Activated CD4-positive, alpha-beta memory T cell treated with anti-CD3 and anti-CD28 coated beads, Interleukin-2, amount 10 ng/mL, durations not matched to agents 7 days and 5 days (primary cell): ENCODE measurements at regions of chr18 and their contacts with region 1.

Region 1: GRCh38 chr18:63161761-63162195 is 157.8 kb downstream of the BCL2 start:
- DNase-seq: peak; percentile 87
- H3K4me3 Mint-ChIP-seq: peak overlapping the region; percentile 76
- H3K27ac Mint-ChIP-seq: peak overlapping the region; percentile 95
- H3K4me1 Mint-ChIP-seq: peaks cover 90% of the 10 kb centered on the region
- H3K27me3 Mint-ChIP-seq: no peaks in the 10 kb centered on the region

Region 2: GRCh38 chr18:63131106-63131958 is 30.4 kb before region 1 on chr18:
- CTCF ChIA-PET with region 1: interaction called, 14 read pairs
- POLR2A ChIA-PET with region 1: interaction called, 10 read pairs
- DNase-seq: peak; percentile 59
- H3K4me3 Mint-ChIP-seq: no peak overlapping the region
- H3K27ac Mint-ChIP-seq: no peak overlapping the region
- H3K4me1 Mint-ChIP-seq: peaks cover 37% of the 10 kb centered on the region
- H3K27me3 Mint-ChIP-seq: no peaks in the 10 kb centered on the region

Region 3: GRCh38 chr18:63175264-63175663 is 13.5 kb after region 1 on chr18:
- CTCF ChIA-PET with region 1: interaction called, 4 read pairs
- POLR2A ChIA-PET with region 1: interaction called, 15 read pairs
- DNase-seq: no peak
- H3K4me3 Mint-ChIP-seq: no peak overlapping the region
- H3K27ac Mint-ChIP-seq: no peak overlapping the region
- H3K4me1 Mint-ChIP-seq: peaks cover 32% of the 10 kb centered on the region
- H3K27me3 Mint-ChIP-seq: no peaks in the 10 kb centered on the region

Region 4: DNA sequence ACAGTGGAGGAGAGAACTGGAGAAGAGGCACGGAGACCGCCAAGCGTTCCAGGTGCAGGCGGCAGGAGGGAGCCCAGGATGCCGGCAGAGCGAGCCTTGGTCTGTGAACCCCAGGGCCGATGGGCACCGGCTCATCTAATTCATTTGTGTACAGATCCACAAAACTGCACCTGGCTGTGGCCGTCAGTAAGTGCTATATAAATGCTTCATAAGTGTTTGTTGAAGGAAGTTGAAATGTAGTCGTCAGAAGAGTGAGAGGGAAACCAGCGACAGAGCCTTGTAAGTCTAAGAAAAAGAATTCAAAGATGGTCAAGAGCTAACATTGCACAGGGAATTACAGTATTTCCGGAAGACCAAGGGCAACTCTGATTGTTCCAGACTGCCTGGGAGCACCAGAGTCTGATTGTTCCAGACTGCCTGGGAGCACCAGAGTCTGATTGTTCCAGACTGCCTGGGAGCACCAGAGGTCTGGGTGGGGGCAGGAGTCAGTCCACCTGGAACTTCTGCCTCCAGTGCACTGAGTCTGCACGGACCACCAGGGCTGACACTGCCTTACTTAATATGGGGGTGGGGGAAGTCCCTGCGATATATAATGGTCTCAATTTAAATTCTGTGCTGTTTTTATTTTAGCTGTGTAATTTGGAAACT is 45.5 kb after region 1 on chr18:
- CTCF ChIA-PET with region 1: interaction called, 5 read pairs
- POLR2A ChIA-PET with region 1: interaction called, 62 read pairs
- DNase-seq: no peak
- H3K4me3 Mint-ChIP-seq: peak overlapping the region; percentile 81
- H3K27ac Mint-ChIP-seq: peak overlapping the region; percentile 94
- H3K4me1 Mint-ChIP-seq: peaks cover 93% of the 10 kb centered on the region
- H3K27me3 Mint-ChIP-seq: no peaks in the 10 kb centered on the region

Region 5: DNA sequence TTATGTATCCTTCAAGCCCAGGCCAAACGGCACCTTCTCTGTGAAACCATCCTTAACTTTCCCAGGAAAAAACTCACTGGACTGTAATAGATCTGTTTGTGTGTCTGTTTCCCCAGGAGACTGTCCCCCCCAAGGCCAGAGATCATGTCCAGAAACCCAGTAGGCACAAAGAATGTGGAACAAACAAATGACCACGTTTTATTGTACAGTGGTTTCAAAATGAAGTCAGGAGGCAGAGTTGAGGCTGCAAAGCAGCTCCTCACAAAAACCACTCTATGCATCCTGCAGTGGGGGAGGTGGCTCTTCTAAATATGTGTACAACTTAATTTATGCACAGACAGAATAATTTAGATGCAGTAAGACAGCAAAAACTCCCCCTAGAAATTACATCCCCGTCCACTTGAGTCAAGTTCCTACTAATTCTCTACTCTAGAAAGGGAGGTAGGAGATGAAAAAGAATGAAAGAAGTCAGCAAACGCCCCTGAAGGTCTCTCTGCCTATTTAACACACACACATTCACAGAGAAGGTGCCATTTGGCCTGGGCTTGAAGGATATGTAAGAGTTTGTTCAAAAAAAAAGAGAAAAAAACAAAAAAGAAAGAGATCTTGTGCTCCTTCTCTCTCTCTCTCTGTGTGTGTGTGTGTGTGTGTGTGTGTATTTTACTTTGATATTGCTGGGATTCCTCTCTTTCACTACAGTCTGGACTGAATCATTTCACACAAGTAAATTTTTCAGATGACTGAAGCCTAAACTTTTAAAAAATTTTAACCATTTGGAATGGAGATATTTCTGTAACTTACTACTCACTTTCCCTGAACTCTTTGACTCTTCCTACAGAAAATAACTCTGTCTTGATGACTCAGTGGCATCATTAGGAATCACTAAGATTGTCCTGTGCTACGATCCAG is 138.3 kb after region 1 on chr18:
- CTCF ChIA-PET with region 1: interaction called, 3 read pairs
- POLR2A ChIA-PET with region 1: interaction called, 14 read pairs
- DNase-seq: peak; percentile 64
- H3K4me3 Mint-ChIP-seq: peak overlapping the region; percentile 53
- H3K27ac Mint-ChIP-seq: peak overlapping the region; percentile 83
- H3K4me1 Mint-ChIP-seq: peaks cover 85% of the 10 kb centered on the region
- H3K27me3 Mint-ChIP-seq: no peaks in the 10 kb centered on the region

Region 6: DNA sequence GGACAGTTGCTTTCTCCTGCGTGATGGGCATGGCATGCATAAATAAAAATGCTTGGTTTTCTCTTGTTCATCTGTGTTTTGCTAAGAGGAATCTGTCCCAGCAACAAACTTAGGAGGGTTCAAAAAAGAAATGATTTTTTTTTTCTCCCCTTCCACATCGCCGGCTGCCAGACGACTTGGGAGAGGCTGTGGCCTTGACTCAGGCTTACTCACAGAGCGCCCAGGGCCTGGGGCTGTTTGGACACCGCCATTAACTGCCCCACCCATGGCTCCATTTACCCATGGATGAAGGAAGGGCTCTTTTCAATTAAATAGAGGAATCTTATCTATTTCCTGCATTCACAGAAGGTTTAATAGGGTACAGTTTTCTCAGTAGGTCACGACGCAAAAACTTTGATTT is 292.7 kb after region 1 on chr18:
- CTCF ChIA-PET with region 1: no interaction called
- POLR2A ChIA-PET with region 1: no interaction called
- DNase-seq: no peak
- H3K4me3 Mint-ChIP-seq: no peak overlapping the region
- H3K27ac Mint-ChIP-seq: no peak overlapping the region
- H3K4me1 Mint-ChIP-seq: no peaks in the 10 kb centered on the region
- H3K27me3 Mint-ChIP-seq: peaks cover 10% of the 10 kb centered on the region